Head of caudate nucleus (tissue), 42 donors: ENCODE measurements at regions of chr18 and their contacts with region 1.

Region 1: DNA sequence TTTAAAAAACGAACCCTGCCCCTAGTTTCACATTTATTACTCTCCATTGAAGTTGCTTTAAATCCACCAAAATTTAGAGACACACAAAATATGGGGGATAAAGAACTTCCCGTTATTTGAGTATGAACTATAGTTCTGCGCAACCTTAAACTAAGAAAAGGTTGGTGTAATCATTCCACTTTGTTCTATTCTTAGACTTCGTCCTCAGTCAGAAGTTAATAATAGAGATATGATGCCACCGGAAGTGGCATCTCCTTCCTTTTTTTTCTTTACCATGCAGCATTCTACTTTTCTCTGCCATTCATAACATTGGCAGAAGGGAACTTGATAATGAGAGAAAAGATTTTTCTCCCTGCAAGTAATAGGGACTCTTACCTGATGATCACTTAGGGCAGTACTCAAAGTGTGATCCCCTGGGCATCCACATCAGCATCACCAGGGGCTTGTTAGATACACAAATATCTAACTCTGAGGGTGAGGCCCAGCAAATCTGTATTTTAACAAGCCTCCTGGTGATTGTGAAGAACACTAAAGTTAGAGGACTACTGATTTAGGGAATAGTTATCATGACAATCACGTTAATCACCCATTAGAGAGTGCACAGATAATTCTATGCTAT is 147.7 kb upstream of the DTNA start:
- DNase-seq: no peak

Region 2: DNA sequence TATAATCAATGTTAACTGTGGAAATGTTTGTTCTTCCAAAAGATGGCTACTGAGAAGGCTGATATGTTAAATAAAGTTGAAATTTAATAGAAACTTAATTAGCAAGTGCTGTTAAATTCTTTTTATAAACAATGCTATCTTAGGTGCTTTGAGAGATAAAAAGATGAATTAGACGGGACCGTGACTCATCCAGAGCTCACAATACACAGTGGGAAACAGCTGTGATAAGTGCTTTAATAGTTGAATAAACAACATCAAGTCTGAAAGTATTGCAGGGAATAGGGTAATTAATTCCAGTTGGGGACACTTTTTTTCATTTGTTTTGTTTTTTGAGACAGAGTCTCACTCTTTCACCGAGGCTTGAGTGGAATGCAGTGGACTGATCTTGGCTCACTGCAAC is 62.2 kb after region 1 on chr18:
- intact Hi-C with region 1: loop called (anchors 10 kb)
- DNase-seq: no peak